Tibial artery (tissue), 4 donors: ENCODE measurements at regions of chr12 and their contacts with region 1.

Region 1: DNA sequence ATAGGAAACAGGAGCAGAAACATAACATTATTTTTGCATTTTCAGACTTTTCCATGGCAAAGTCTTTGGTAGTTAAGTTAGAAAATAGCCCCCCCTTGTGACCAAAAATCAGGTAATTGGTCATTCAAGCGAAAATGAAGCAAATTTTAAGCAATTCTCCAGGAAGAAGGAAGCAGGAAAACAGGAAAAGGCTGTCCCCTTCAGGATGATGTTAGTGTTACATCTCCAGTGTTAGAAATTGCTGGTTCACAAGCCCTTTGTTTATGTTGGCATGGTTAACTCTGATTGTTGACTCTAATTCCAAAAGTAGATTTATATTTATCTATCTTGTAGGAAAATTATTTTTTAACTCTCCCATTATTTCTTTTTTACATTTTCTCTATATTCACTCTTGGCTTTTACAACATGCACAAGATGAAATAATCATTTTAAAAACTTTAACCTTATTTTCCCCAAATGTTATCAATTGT is 18.8 kb upstream of the GAS2L3 start:
- DNase-seq: no peak
- H3K4me3 ChIP-seq: no peak overlapping the region
- H3K27ac ChIP-seq: no peak overlapping the region
- H3K4me1 ChIP-seq: peaks cover 0 to 3% (median 0%) of the 10 kb centered on the region in 4 donors
- H3K27me3 ChIP-seq: peaks cover 0 to 2% of the 10 kb centered on the region in 2 donors
- CTCF ChIP-seq: peak; percentile 59 to 74

Region 2: DNA sequence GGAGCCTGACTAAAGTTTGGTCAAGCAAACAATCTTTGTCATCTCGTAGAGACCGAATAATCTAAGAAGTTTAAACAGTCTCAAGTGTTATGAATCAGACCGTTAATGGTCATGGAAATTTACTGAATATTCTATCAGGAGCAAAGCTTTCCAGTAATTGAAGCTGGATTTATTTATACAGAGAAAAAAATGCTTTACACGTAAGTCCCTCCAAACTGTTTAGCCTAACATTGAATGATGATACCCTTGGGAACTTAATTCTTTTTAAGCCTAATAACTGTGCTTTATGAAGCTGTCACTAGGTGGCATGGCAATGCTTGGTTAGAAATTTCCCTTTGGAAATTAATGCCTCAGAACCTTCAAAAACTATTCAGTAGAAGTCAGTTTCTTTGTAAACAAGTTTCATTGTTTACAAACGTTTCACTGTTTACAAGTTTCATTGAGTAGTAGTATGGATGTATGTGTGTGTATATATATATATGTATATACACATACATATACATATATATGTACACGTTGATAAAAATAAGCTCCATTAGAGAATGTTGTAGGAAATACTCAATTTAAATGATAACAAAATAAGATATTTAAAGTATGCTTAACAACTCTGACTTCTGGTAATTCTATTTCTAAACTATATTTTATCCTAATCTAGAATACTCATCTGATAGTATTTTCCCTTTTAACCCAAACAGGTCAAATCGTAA is 319.9 kb before region 1 on chr12:
- intact Hi-C with region 1: loop called (anchors 10 kb)
- DNase-seq: no peak
- H3K4me3 ChIP-seq: no peak overlapping the region
- H3K27ac ChIP-seq: no peak overlapping the region
- H3K4me1 ChIP-seq: peaks cover 0 to 7% (median 6%) of the 10 kb centered on the region in 4 donors
- H3K27me3 ChIP-seq: no peaks in the 10 kb centered on the region
- CTCF ChIP-seq: peak; percentile 68 to 72